Caco-2 (cell line): ENCODE measurements at regions of chr4 and their contacts with region 1.

Region 1: GRCh38 chr4:44726262-44726871 is at the start of gene GNPDA2:
- DNase-seq: peak; percentile 88
- H3K4me3 ChIP-seq: peak within 1 kb of the TSS; percentile 74
- H3K4me3 Mint-ChIP-seq: peak within 1 kb of the TSS; percentile 73
- H3K27ac Mint-ChIP-seq: peak within 1 kb of the TSS; percentile 89
- H3K4me1 ChIP-seq: no peaks in the 10 kb centered on the region
- H3K4me1 Mint-ChIP-seq: no peaks in the 10 kb centered on the region
- H3K27me3 ChIP-seq: no peaks in the 10 kb centered on the region
- H3K27me3 Mint-ChIP-seq: peaks cover under 1% of the 10 kb centered on the region
- CTCF ChIP-seq: no peak
- total RNA-seq, gene GNPDA2: 4.8 and 5.8 TPM in 2 replicates

Region 2: GRCh38 chr4:44522761-44523445 is 203.5 kb before region 1 on chr4:
- CTCF ChIA-PET with region 1: no interaction called
- POLR2A ChIA-PET with region 1: no interaction called
- intact Hi-C with region 1: no loop called
- DNase-seq: no peak
- H3K4me3 ChIP-seq: no peak overlapping the region
- H3K4me3 Mint-ChIP-seq: no peak overlapping the region
- H3K27ac Mint-ChIP-seq: no peak overlapping the region
- H3K4me1 ChIP-seq: no peaks in the 10 kb centered on the region
- H3K4me1 Mint-ChIP-seq: no peaks in the 10 kb centered on the region
- H3K27me3 ChIP-seq: no peaks in the 10 kb centered on the region
- H3K27me3 Mint-ChIP-seq: peaks cover 8% of the 10 kb centered on the region
- CTCF ChIP-seq: no peak

Region 3: DNA sequence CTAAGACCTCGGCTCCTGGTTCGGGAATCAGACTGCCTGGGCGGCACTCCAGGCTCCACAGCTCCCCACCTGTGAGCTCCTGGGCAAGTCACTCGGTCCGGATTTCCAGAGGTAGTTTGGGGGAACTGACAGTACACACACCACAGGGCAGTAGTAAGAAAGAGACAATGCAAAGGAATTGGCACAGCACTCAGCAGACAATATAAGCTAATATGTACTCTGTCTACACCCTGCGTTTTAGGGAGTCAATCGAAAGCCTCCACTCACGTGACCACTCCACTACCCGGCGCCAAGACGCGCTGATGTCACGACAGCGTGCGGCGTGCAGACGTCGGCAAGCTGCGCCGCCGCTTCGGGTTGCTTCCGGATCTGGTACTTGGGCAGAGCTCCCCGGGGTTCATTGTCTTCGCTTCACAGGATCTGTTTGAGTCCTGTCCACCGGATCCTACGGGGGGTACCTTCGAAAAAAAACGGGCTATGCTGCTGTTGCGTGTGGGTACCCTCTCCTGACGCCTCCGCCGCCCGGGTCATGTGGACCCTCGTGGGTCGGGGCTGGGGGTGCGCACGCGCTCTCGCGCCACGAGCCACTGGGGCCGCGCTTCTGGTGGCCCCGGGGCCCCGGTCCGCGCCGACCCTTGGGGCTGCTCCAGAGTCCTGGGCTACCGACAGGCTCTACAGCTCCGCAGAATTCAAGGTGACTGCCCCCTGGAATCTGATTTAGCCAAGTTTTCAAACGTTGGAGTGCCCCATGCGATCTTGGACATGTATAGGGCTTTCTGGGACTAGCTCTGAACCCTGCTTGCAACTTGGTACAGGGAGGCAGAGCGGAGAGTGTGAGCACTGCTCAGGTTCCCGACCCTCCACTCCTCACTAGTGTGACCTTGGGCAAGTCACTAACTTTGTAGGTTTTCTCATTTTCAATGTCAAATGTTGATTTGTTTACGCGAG is 48.0 kb before region 1 on chr4 and contains the start of gene GUF1:
- CTCF ChIA-PET with region 1: no interaction called
- POLR2A ChIA-PET with region 1: no interaction called
- intact Hi-C with region 1: loop called (anchors 2 kb)
- DNase-seq: peak; percentile 85 to 86
- H3K4me3 ChIP-seq: peak within 1 kb of the TSS; percentile 69
- H3K4me3 Mint-ChIP-seq: peak within 1 kb of the TSS; percentile 95
- H3K27ac Mint-ChIP-seq: peak within 1 kb of the TSS; percentile 97
- H3K4me1 ChIP-seq: no peaks in the 10 kb centered on the region
- H3K4me1 Mint-ChIP-seq: no peaks in the 10 kb centered on the region
- H3K27me3 ChIP-seq: no peaks in the 10 kb centered on the region
- H3K27me3 Mint-ChIP-seq: no peaks in the 10 kb centered on the region
- CTCF ChIP-seq: no peak
- total RNA-seq, gene GUF1: 27.6 and 29.0 TPM in 2 replicates